Ovary (tissue), 10 donors: ENCODE measurements at regions of chr20 and their contacts with region 1.

Region 1: DNA sequence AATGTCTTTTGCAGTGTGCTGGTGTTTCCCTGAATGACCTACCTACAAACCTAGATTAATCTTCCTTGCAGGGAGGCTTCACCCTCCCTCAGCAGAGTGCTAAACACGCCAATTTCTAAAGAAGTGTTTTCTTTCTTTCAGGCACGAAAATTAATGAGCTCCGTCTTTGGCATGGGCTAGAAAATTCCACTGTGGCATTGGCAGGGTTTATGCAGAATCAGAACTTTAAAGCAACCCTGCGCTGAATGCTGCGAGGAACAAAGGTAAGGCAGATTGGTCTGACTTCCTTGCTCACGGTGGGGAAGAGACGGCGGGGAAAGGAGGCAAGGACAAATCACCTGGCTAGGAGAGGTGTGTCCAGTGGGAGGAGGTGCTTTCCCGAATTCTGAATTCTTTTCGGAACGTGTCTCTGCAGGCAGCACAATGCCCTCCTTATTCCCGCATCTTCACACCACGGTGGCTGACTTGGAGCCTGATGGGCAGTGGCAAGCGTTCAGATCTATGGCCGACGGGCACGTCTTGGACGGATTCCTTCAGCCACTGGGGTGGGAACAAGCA is 6.2 kb upstream of the BANF2 start:
- DNase-seq: no peak
- H3K4me3 ChIP-seq: no peak overlapping the region
- H3K27ac ChIP-seq: no peak overlapping the region
- H3K4me1 ChIP-seq: no peaks in the 10 kb centered on the region
- H3K27me3 ChIP-seq: no peaks in the 10 kb centered on the region
- CTCF ChIP-seq: no peak
- EP300 ChIP-seq: no peak
- POLR2A ChIP-seq: no peak

Region 2: DNA sequence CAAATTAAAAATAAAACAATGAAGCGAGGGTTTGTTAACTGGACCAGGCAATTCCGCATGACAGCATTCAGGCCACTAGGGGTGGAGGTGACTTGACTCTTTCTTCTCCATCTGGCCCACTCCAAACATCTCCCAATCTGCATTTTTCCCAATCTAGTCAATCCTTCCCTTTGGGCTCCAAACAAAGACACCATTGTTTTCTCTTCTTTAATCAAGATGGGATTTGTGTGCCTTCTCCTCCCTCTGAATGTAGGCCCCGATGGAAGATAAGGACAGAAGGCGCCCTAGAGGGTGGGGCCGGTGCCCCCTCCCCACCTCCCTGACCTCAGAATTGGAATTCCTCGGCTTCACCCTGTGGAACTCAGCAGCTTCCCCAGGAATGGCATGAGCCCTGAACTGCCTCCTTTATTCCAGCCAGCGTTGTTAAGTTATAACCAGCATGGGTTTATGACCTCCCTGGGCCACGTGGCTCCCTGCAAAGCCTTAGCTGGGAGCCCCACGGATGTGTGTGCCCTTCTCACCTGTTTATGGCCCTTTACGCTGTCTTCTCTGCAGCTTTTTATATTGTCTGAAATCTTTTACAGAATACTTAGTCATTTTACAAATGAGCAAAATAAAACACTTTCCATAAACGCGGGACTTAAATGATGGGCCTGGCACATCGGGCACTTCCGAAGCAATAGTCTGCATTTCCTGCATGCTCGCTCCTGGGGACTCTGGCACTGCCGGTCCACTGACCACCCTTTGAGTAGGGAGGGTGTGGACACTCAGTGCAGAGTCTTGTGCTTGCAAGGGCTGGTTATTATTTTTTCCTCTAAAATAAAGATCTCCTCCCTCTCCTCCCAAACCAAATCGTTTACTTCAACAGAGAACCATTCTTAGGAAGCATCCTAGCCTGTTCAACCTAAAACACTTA is 339.7 kb after region 1 on chr20:
- intact Hi-C with region 1: loop called in 1 of 4 experiments (anchors 5 kb)
- DNase-seq: no peak
- H3K4me3 ChIP-seq: no peak overlapping the region
- H3K27ac ChIP-seq: no peak overlapping the region
- H3K4me1 ChIP-seq: no peaks in the 10 kb centered on the region
- H3K27me3 ChIP-seq: no peaks in the 10 kb centered on the region
- CTCF ChIP-seq: no peak
- EP300 ChIP-seq: no peak
- POLR2A ChIP-seq: no peak